CD14-positive monocyte (primary cell): ENCODE measurements at regions of chr1 and their contacts with region 1.

Region 1: DNA sequence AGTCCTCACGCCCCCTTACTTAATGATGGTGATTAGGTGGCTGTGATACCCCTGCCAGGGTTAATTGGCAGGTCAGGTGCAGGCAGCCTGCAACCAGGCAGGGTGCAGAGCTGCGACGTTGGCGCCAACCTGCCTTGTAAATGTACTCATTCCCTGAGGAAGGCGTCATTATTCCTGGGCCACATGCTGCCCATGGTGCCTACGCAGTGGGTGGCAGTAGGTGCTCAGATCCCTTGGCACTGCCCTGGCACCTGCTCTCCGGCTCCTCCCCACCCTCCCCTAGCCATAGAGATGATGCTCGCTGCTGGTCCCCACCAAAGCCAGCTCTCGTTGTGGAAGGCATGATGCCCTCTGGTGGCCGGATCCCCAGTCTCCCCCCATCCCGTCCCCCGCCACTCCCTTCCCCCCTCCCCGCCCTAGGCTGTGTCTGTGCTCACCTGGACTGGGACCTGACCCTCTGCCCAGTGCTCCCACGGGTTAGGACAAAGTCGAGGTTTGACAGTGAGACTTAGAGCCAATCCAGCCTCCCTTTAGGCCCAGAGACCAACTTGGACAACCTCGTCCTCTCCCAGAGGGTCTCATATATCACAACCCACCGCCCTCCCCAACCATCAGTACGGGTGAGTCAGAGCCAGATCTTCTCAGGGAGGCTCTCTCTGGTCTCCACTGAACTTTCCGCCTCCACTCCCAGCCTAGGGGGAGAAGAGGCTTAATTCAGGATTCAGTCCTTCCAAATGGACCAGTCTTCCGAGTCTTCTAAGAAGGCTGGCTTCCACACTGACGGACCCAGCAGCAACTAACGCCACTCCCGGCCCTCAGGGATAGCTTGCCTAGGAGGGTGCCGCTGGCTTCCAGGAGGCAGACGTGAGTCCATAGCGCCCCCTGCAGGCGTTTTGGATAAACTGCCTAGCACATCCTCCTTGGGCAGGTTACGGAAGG is 5.7 kb downstream of the KRTCAP2 start:
- DNase-seq: peak; percentile 80 to 85 (median 84)
- H3K4me3 ChIP-seq: no peak overlapping the region
- H3K4me3 Mint-ChIP-seq: peak overlapping the region in 1 of 2 donors; percentile 62
- H3K27ac ChIP-seq: no peak overlapping the region
- H3K27ac Mint-ChIP-seq: peak overlapping the region in 2 of 7 donors; percentile 40 to 80
- H3K4me1 ChIP-seq: peaks cover 22% of the 10 kb centered on the region in 2 donors
- H3K4me1 Mint-ChIP-seq: peaks cover 24% of the 10 kb centered on the region
- H3K27me3 ChIP-seq: peaks cover 0 to 15% of the 10 kb centered on the region in 2 donors
- H3K27me3 Mint-ChIP-seq: peaks cover 16 to 23% (median 22%) of the 10 kb centered on the region in 3 donors
- CTCF ChIP-seq: peak; percentile 88

Region 2: GRCh38 chr1:154847891-154848290 is 319.5 kb before region 1 on chr1:
- intact Hi-C with region 1: no loop called
- DNase-seq: no peak
- H3K4me3 ChIP-seq: no peak overlapping the region
- H3K4me3 Mint-ChIP-seq: no peak overlapping the region
- H3K27ac ChIP-seq: no peak overlapping the region
- H3K27ac Mint-ChIP-seq: no peak overlapping the region
- H3K4me1 ChIP-seq: no peaks in the 10 kb centered on the region
- H3K4me1 Mint-ChIP-seq: no peaks in the 10 kb centered on the region
- H3K27me3 ChIP-seq: no peaks in the 10 kb centered on the region
- H3K27me3 Mint-ChIP-seq: peaks cover 2 to 3% (median 3%) of the 10 kb centered on the region in 3 donors
- CTCF ChIP-seq: no peak

Region 3: GRCh38 chr1:155091071-155091709 is 76.2 kb before region 1 on chr1:
- intact Hi-C with region 1: loop called (anchors 1 to 2 kb)
- DNase-seq: peak; percentile 71 to 79 (median 75)
- H3K4me3 ChIP-seq: no peak overlapping the region
- H3K4me3 Mint-ChIP-seq: peak overlapping the region in 1 of 2 donors; percentile 48
- H3K27ac ChIP-seq: no peak overlapping the region
- H3K27ac Mint-ChIP-seq: no peak overlapping the region
- H3K4me1 ChIP-seq: peaks cover 3 to 12% of the 10 kb centered on the region in 2 donors
- H3K4me1 Mint-ChIP-seq: peaks cover 8% of the 10 kb centered on the region
- H3K27me3 ChIP-seq: peaks cover 0 to 6% of the 10 kb centered on the region in 2 donors
- H3K27me3 Mint-ChIP-seq: peaks cover 5 to 15% (median 9%) of the 10 kb centered on the region in 3 donors
- CTCF ChIP-seq: peak; percentile 97

Region 4: GRCh38 chr1:155117617-155118016 is 49.8 kb before region 1 on chr1:
- intact Hi-C with region 1: no loop called
- DNase-seq: no peak
- H3K4me3 ChIP-seq: no peak overlapping the region
- H3K4me3 Mint-ChIP-seq: no peak overlapping the region
- H3K27ac ChIP-seq: no peak overlapping the region
- H3K27ac Mint-ChIP-seq: peak overlapping the region in 1 of 7 donors; percentile 33
- H3K4me1 ChIP-seq: no peaks in the 10 kb centered on the region
- H3K4me1 Mint-ChIP-seq: no peaks in the 10 kb centered on the region
- H3K27me3 ChIP-seq: peaks cover 0 to 5% of the 10 kb centered on the region in 2 donors
- H3K27me3 Mint-ChIP-seq: peaks cover 5 to 29% (median 7%) of the 10 kb centered on the region in 3 donors
- CTCF ChIP-seq: no peak

Region 5: DNA sequence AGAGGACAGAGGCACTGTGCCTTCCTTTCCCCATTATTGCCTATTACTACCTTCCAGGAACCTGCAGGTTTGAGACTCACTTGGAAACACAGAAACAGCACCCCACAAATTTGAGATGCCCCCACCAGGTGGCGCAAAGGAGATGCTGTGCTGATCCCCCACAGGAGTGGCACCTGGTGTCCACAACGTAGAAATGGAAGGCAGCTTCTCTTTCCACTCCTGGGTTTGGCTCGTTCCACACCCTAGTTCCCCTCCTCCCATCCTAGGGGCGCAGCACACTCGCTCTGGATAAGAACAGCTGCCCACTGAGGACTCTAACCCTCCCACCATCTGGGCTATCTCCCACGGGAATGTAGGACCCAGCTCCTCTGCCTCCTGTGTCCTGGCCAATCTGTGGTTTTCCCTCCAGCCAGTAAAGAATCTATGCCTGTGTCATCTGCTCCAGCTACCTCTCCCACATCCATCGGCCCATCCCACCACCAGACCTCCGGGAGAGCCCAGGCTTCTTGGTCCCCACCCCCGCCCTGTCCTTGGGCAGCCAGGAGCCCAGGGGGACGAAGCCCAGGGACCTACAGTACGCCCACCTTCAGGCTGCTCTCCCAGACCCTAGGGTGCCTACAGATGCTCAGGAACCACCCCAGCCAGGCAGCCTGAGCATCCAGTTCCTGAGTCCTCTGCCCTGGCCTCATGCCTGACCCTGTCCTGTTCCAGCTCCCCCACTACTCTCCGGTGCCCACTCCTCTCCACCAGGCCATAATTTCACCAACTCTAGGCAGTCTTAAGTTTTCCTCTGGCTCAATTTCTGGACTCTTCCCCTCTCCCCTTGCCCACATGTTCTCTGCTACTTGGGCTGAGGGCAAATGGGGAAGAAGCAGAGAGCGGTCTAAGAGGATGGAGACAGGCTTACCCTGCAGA is 39.7 kb after region 1 on chr1:
- intact Hi-C with region 1: no loop called
- DNase-seq: peak; percentile 80 to 83 (median 81)
- H3K4me3 ChIP-seq: peak overlapping the region in 1 of 3 experiments; percentile 90
- H3K4me3 Mint-ChIP-seq: peak overlapping the region; percentile 76 to 83
- H3K27ac ChIP-seq: peak overlapping the region; percentile 98 to 100
- H3K27ac Mint-ChIP-seq: peak overlapping the region; percentile 83 to 100 (median 99)
- H3K4me1 ChIP-seq: peaks cover 52 to 54% of the 10 kb centered on the region in 2 donors
- H3K4me1 Mint-ChIP-seq: peaks cover 47% of the 10 kb centered on the region
- H3K27me3 ChIP-seq: no peaks in the 10 kb centered on the region
- H3K27me3 Mint-ChIP-seq: no peaks in the 10 kb centered on the region
- CTCF ChIP-seq: peak; percentile 93